ENCODE measurements at regions of chr1 and their contacts with region 1.

Region 1: GRCh38 chr1:156717275-156717805 is 10.9 kb upstream of the METTL25B start:
- DNase-seq: no peak
- ATAC-seq: no peak
- H3K4me3 ChIP-seq: no peak overlapping the region
- H3K27ac ChIP-seq: no peak overlapping the region
- H3K4me1 ChIP-seq: peaks cover 15% of the 10 kb centered on the region
- H3K27me3 ChIP-seq: no peaks in the 10 kb centered on the region
- CTCF ChIP-seq: no peak

Region 2: GRCh38 chr1:155172732-155173477 is 1544.4 kb before region 1 on chr1 and contains the start of gene KRTCAP2:
- CTCF ChIA-PET with region 1: interaction called, 10 read pairs
- POLR2A ChIA-PET with region 1: no interaction called
- in situ Hi-C with region 1: no loop called
- intact Hi-C with region 1: no loop called
- DNase-seq: peak; percentile 89
- ATAC-seq: peak; percentile 81
- H3K4me3 ChIP-seq: peak within 1 kb of the TSS; percentile 88 to 89
- H3K27ac ChIP-seq: peak within 1 kb of the TSS; percentile 92
- H3K4me1 ChIP-seq: peaks cover 24% of the 10 kb centered on the region
- H3K27me3 ChIP-seq: no peaks in the 10 kb centered on the region
- CTCF ChIP-seq: peak; percentile 97
- total RNA-seq, gene KRTCAP2: 155 TPM

Region 3: GRCh38 chr1:156652131-156652991 is 65.0 kb before region 1 on chr1:
- CTCF ChIA-PET with region 1: no interaction called
- POLR2A ChIA-PET with region 1: no interaction called
- in situ Hi-C with region 1: no loop called
- intact Hi-C with region 1: no loop called
- DNase-seq: no peak
- ATAC-seq: no peak
- H3K4me3 ChIP-seq: no peak overlapping the region
- H3K27ac ChIP-seq: no peak overlapping the region
- H3K4me1 ChIP-seq: no peaks in the 10 kb centered on the region; the same call in 1 of the 2 replicates
- H3K27me3 ChIP-seq: no peaks in the 10 kb centered on the region
- CTCF ChIP-seq: no peak

Region 4: DNA sequence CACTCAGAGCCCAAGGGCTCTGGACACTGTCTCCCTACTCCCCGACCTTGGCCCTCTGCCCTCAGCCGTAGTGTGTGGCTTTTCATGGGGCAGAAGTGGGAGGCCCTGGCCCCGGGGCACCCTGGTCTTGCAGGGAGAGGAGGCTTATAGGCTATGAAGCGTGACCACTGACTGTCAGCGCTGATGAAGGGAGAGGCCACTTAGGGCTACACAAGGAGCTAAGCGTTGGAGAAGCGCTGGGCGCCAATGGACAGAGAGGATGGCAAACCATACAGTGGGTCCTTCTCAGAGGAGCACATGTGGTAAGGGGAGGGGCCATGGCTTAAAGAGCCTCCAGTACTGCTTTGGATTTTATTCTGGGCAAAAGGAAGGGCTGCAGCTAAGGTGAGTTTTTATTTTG is 19.9 kb before region 1 on chr1:
- CTCF ChIA-PET with region 1: no interaction called
- POLR2A ChIA-PET with region 1: interaction called, 13 read pairs
- in situ Hi-C with region 1: no loop called
- intact Hi-C with region 1: no loop called
- DNase-seq: no peak
- ATAC-seq: peak; percentile 56
- H3K4me3 ChIP-seq: peak overlapping the region in 1 of 2 experiments; percentile 28; a peak in 2 of 4 replicates
- H3K27ac ChIP-seq: peak overlapping the region; percentile 90
- H3K4me1 ChIP-seq: peaks cover 78% of the 10 kb centered on the region
- H3K27me3 ChIP-seq: no peaks in the 10 kb centered on the region
- CTCF ChIP-seq: no peak

Region 5: DNA sequence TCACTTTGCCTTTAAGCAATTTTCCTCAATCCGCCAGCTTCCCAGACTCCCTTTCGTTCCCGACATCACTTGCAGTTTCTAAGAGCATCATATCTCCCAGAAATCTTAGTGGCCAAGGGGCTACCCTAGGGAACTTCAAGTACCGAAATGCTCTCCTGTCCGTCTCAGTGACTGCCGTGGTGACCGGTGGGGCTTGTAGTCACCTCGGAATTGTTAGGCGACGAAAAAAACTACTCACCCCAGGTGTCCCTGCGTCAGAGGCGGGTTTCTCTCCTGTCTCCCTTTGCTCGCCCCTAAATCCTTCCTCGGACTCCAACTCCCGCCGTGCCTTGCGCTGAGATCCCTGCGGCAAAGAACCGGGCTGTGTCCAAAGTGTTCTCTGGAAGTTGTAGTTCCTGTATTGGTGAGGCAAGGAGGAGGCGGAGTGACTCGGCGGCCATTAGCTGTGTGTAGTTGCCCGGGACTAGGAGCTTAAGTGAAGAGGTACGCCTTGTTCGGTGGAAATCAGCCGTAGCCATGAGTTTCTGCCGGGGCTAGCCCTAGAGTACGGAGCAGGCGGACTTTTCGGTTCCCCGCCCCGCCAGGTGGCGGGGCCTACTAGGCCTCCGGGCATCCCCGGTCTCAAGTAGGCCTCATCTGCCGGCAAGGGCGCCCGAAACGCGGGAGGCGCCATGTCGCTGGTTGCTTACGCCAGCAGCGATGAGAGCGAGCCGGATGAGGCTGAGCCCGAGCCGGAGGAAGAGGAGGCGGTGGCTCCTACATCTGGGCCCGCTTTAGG is 50.0 kb after region 1 on chr1 and contains the start of gene PRCC:
- CTCF ChIA-PET with region 1: no interaction called
- POLR2A ChIA-PET with region 1: no interaction called
- in situ Hi-C with region 1: no loop called
- intact Hi-C with region 1: no loop called
- DNase-seq: peak; percentile 100
- ATAC-seq: peak; percentile 97
- H3K4me3 ChIP-seq: peak within 1 kb of the TSS; percentile 98 to 99
- H3K27ac ChIP-seq: peak within 1 kb of the TSS; percentile 99
- H3K4me1 ChIP-seq: peaks cover 23% of the 10 kb centered on the region
- H3K27me3 ChIP-seq: no peaks in the 10 kb centered on the region
- CTCF ChIP-seq: no peak
- total RNA-seq, gene PRCC: 78.5 TPM